Activated CD4-positive, alpha-beta memory T cell treated with anti-CD3 and anti-CD28 coated beads, Interleukin-2, amount 10 ng/mL, durations not matched to agents 7 days and 5 days (primary cell): ENCODE measurements at regions of chr19 and their contacts with region 1.

Region 1: DNA sequence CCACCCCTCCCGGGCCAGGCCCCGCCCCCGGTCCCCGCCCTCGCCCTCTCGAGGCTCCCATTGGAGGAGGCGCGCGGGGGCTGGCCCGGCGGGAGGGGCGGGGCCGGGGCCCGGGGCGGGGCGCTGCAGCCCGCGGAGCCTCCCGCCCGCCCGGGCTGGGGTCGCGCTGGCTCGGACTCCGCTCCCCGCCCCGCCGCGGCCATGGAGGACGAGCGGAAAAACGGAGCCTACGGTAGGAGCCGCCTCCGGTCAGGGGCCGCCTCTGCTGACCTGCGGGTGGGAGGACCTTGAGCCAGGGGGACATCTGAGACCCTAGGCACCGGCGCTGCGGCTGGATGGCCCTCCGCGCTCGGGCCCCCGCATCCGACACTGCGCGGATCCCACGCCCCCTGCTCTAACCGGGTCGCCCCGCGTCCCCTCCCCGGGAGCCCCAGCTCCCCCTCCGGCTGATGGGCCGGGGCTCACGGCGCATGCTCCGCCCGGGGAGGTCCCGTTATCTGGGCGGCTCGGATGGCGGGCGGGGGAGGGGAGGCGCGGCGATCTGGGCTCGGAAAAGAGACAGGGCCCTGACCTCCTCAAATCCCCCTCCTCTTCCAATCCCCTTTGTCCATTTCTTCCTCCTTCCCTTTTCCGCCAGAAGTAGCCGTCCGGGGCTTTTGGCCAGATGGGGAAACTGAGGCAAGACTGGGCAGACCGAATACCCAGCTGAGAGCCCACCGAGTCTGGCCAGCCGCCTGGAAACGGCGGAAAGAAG is 15.4 kb upstream of the AP1M2 start:
- DNase-seq: peak; percentile 91
- H3K4me3 Mint-ChIP-seq: peak overlapping the region; percentile 95
- H3K27ac Mint-ChIP-seq: peak overlapping the region; percentile 99
- H3K4me1 Mint-ChIP-seq: peaks cover 25% of the 10 kb centered on the region
- H3K27me3 Mint-ChIP-seq: peaks cover 3% of the 10 kb centered on the region

Region 2: DNA sequence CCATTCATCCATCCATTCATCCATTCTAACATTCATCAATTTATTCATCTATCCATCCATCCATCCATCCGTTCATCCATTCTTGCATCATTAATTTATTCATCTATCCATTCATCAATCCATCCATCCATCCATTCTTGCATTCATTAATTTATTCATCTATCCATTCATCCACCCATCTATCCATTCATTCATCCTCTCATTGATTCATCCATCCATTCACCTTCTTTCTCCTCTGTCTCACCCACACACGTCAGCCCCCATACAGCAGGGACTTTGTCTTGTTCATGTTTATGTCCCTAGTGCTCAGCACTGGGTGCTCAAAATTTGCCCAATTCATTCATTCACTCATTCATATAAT is 14.7 kb before region 1 on chr19:
- CTCF ChIA-PET with region 1: interaction called, 39 read pairs
- POLR2A ChIA-PET with region 1: interaction called, 15 read pairs
- DNase-seq: no peak
- H3K4me3 Mint-ChIP-seq: no peak overlapping the region
- H3K27ac Mint-ChIP-seq: no peak overlapping the region
- H3K4me1 Mint-ChIP-seq: peaks cover 22% of the 10 kb centered on the region
- H3K27me3 Mint-ChIP-seq: peaks cover 21% of the 10 kb centered on the region

Region 3: GRCh38 chr19:10612491-10613119 is 10.1 kb after region 1 on chr19:
- CTCF ChIA-PET with region 1: no interaction called
- POLR2A ChIA-PET with region 1: interaction called, 31 read pairs
- DNase-seq: no peak
- H3K4me3 Mint-ChIP-seq: no peak overlapping the region
- H3K27ac Mint-ChIP-seq: no peak overlapping the region
- H3K4me1 Mint-ChIP-seq: peaks cover 28% of the 10 kb centered on the region
- H3K27me3 Mint-ChIP-seq: no peaks in the 10 kb centered on the region

Region 4: DNA sequence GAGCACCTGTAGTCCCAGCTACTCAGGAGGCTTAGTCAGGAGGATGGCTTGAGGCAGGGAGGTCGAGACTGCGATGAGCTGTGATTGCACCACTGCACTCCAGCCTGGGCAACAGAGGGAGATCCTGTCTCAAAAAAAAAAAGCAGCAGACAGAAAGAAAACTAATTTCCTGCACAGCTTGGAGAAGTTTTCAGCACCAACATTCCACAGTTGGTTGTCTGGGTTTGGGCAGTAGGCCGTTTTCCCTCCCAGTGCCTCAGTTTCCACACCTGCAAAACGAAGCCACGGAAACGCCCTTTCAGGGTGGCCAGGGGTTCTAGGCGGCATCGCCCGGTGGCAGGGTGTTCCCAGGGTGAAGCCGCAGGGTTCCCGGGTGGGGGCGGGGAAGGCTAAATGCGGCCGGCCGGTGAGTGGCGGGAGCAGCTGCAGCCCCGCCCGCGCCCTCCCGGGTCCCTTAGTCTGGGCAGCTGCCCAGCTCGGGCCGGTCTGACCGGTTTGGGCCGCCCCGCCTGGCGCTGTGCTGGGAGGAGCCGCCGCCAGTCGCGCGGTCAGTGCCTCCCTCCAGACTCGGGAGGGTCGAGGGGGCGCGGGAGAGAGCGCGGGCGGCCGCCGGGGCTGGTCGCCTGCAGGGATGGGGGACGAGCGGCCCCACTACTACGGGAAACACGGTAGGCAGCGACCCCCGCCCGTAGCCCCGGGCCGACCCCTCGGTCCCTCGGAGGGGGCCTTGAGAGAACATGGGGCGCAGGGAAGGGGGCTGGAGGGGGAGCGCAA is 22.7 kb after region 1 on chr19 and contains the start of gene SLC44A2:
- CTCF ChIA-PET with region 1: no interaction called
- POLR2A ChIA-PET with region 1: interaction called, 34 read pairs
- DNase-seq: no peak
- H3K4me3 Mint-ChIP-seq: no peak within 1 kb of the TSS
- H3K27ac Mint-ChIP-seq: peak within 1 kb of the TSS; percentile 84
- H3K4me1 Mint-ChIP-seq: peaks cover 44% of the 10 kb centered on the region
- H3K27me3 Mint-ChIP-seq: no peaks in the 10 kb centered on the region
- total RNA-seq, gene SLC44A2: 147 to 152 TPM

Region 5: GRCh38 chr19:10644260-10645007 is 41.9 kb after region 1 on chr19:
- CTCF ChIA-PET with region 1: interaction called, 15 read pairs
- POLR2A ChIA-PET with region 1: interaction called, 19 read pairs
- DNase-seq: peak; percentile 83
- H3K4me3 Mint-ChIP-seq: no peak overlapping the region
- H3K27ac Mint-ChIP-seq: no peak overlapping the region
- H3K4me1 Mint-ChIP-seq: peaks cover 3% of the 10 kb centered on the region
- H3K27me3 Mint-ChIP-seq: no peaks in the 10 kb centered on the region

Region 6: GRCh38 chr19:10769533-10770491 is 167.3 kb after region 1 on chr19:
- CTCF ChIA-PET with region 1: no interaction called
- POLR2A ChIA-PET with region 1: no interaction called
- DNase-seq: no peak
- H3K4me3 Mint-ChIP-seq: no peak overlapping the region
- H3K27ac Mint-ChIP-seq: peak overlapping the region; percentile 7
- H3K4me1 Mint-ChIP-seq: peaks cover 48% of the 10 kb centered on the region
- H3K27me3 Mint-ChIP-seq: no peaks in the 10 kb centered on the region